Aorta (tissue), 5 donors: ENCODE measurements at regions of chr1 and their contacts with region 1.

Region 1: GRCh38 chr1:71049951-71050598 is 2.5 kb upstream of the PTGER3 start:
- DNase-seq: no peak
- ATAC-seq: peak; percentile 42
- H3K4me3 ChIP-seq: no peak overlapping the region
- H3K27ac ChIP-seq: no peak overlapping the region
- H3K4me1 ChIP-seq: no peaks in the 10 kb centered on the region
- H3K27me3 ChIP-seq: no peaks in the 10 kb centered on the region

Region 2: GRCh38 chr1:70528590-70529333 is 521.3 kb before region 1 on chr1:
- intact Hi-C with region 1: loop called (anchors 1 to 5 kb)
- DNase-seq: no peak
- ATAC-seq: peak; percentile 64
- H3K4me3 ChIP-seq: no peak overlapping the region
- H3K27ac ChIP-seq: no peak overlapping the region
- H3K4me1 ChIP-seq: no peaks in the 10 kb centered on the region
- H3K27me3 ChIP-seq: no peaks in the 10 kb centered on the region

Region 3: DNA sequence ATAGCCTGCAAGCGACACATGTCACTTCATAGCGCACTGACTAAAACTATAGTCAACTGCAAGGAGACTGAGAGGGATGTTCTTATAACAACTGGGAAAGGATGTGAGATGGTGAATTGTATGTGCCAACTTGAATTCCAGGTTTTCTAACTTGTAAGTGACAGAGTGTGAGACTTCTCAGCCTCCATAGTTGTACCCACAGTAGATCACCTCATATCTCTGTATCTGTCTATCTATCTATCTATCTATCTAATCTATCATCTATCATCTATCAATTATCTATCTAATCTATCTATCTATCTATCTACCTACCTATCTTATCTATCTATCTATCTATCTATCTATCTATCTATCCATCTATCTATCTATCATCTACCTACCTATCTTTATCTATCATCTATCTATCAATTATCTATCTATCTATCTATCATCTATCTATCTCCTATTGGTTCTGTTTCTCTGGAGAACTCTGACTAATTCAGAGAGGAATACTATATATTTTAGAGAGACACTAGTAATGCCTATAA is 476.7 kb before region 1 on chr1:
- intact Hi-C with region 1: no loop called
- DNase-seq: no peak
- ATAC-seq: no peak
- H3K4me3 ChIP-seq: no peak overlapping the region
- H3K27ac ChIP-seq: no peak overlapping the region
- H3K4me1 ChIP-seq: no peaks in the 10 kb centered on the region
- H3K27me3 ChIP-seq: no peaks in the 10 kb centered on the region

Region 4: GRCh38 chr1:70685300-70686241 is 364.5 kb before region 1 on chr1:
- intact Hi-C with region 1: loop called (anchors 1 to 2 kb)
- DNase-seq: peak; percentile 54 to 72
- ATAC-seq: peak; percentile 92
- H3K4me3 ChIP-seq: no peak overlapping the region
- H3K27ac ChIP-seq: no peak overlapping the region
- H3K4me1 ChIP-seq: no peaks in the 10 kb centered on the region
- H3K27me3 ChIP-seq: no peaks in the 10 kb centered on the region

Region 5: DNA sequence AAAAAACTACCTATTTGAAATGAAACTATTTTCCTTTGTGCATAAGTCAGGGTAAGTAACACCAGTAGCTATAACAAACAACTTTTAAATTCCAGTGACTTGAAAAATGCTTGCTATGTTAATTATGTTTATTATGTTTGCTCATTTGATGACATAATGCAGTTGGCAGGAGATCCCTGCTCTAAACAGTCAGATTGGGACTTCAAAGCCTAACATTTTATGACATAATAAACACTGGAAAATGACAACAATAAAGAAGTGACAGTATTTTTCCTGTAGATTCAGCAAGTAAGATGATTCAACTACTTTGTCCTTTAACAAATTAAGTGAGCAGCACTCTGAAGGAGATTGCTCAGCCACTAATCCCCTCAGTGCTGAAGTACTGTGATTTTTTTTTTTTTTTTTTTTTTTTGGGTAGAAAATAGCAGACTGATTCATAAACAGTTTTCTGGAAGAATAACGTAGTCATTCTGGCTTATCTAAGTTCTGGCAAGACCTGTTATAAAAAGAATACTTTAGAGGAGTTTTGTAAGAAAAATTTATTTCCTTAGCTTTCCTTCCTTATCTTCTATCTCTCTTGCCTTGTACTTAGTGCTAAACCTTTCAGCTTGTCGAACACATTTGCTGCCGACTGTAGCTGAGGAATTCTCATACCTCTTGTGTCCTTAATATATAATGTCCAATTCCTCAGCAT is 209.7 kb before region 1 on chr1:
- intact Hi-C with region 1: loop called in 1 of 2 experiments (anchors 5 kb)
- DNase-seq: no peak
- ATAC-seq: no peak
- H3K4me3 ChIP-seq: no peak overlapping the region
- H3K27ac ChIP-seq: no peak overlapping the region
- H3K4me1 ChIP-seq: no peaks in the 10 kb centered on the region
- H3K27me3 ChIP-seq: no peaks in the 10 kb centered on the region

Region 6: DNA sequence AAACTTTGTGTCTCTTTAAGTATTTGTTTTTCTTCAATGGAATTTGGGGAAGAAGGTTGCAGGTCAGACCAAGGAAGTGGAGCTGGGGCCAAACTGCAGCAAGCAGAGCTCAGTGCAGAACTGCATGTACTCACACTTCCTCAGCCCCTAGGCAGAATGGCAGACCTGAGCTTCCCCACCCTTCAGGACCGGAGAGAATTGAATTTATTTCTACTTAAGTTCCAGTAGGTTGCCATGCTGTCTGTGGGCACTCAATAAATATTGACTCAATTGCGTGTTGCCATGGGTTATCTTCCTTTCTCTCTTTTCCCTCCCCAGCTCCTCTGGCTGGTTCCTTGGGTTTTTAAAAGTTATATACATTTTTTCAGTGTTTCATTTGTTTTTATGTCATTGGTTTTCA is 176.0 kb before region 1 on chr1:
- intact Hi-C with region 1: loop called in 1 of 2 experiments (anchors 10 kb)
- DNase-seq: no peak
- ATAC-seq: peak; percentile 60
- H3K4me3 ChIP-seq: no peak overlapping the region
- H3K27ac ChIP-seq: peak overlapping the region; percentile 10 to 49
- H3K4me1 ChIP-seq: peaks cover 0 to 10% of the 10 kb centered on the region in 2 donors
- H3K27me3 ChIP-seq: no peaks in the 10 kb centered on the region

Region 7: GRCh38 chr1:70963374-70963773 is 86.7 kb before region 1 on chr1:
- intact Hi-C with region 1: loop called in 1 of 2 experiments (anchors 10 kb)
- DNase-seq: no peak
- ATAC-seq: no peak
- H3K4me3 ChIP-seq: no peak overlapping the region
- H3K27ac ChIP-seq: no peak overlapping the region
- H3K4me1 ChIP-seq: peaks cover 0 to 2% of the 10 kb centered on the region in 2 donors
- H3K27me3 ChIP-seq: no peaks in the 10 kb centered on the region

Region 8: DNA sequence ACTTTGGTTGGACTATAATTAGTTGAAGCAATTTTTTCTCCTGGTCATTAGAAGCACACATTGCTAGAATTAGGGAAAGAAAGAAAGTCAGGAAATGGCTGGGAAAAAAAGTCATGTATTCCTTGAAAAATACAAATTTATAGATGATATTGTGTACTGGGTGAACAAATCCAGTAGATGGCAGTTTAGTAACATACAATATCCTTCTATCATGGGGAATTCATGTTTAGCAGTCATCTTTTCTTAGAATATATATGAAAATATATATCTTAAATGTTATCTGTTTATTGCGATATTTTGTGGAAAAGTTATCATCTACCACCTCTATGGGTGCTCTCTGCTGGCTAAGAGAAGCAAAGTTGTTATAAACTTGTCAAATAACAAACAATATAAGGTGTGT is 43.9 kb after region 1 on chr1:
- intact Hi-C with region 1: no loop called
- DNase-seq: no peak
- ATAC-seq: no peak
- H3K4me3 ChIP-seq: no peak overlapping the region
- H3K27ac ChIP-seq: no peak overlapping the region
- H3K4me1 ChIP-seq: peaks cover 0 to 2% of the 10 kb centered on the region in 2 donors
- H3K27me3 ChIP-seq: no peaks in the 10 kb centered on the region